ENCODE measurements at regions of chr17 and their contacts with region 1.

Region 1: DNA sequence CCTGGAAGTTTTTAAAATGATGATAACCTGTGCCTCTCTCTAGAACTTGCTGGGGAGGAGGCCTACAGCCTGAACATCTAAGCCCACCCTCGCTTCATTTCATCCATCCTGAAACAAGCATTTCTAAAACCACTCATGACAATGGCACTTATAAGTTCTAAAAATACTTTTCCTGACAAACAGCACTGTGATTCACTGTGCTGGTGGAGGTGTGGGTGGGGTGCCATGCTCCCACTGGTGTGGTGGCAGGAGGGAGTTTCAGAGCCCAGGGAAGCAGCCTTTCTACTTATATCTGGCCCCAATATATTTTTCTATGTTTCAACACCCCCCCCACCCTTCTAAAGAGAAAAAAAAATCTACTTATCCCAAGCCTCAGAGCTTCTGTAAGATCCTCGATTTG is 52.6 kb downstream of the RAB11FIP4 start:
- DNase-seq: no peak
- ATAC-seq: no peak
- H3K4me3 ChIP-seq: no peak overlapping the region
- H3K27ac ChIP-seq: no peak overlapping the region
- H3K4me1 ChIP-seq: no peaks in the 10 kb centered on the region
- H3K27me3 ChIP-seq: no peaks in the 10 kb centered on the region
- CTCF ChIP-seq: no peak

Region 2: DNA sequence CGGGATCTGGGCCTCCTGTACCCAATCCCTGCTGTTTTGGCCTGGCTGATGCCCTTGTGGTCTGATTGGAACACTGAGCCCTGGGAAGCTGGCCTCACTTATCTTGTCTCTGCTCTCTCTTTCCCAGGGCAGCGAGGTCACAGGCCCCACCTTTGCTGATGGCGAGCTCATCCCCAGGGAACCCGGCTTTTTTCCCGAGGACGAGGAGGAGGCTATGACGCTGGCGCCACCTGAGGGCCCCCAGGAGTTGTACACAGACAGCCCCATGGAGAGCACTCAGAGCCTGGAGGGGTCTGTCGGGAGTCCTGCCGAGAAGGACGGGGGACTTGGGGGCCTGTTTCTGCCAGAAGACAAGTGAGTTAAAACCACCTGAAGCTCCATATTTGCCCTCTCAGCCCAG is 73.5 kb after region 1 on chr17:
- intact Hi-C with region 1: loop called in 1 of 10 experiments (anchors 5 kb)
- DNase-seq: no peak
- ATAC-seq: peak in 3 of 8 donors; percentile 19 to 67 (median 53)
- H3K4me3 ChIP-seq: no peak overlapping the region
- H3K27ac ChIP-seq: no peak overlapping the region
- H3K4me1 ChIP-seq: peaks cover 0 to 3% (median 0%) of the 10 kb centered on the region in 9 donors
- H3K27me3 ChIP-seq: no peaks in the 10 kb centered on the region
- CTCF ChIP-seq: peak in 8 of 9 donors; percentile 15 to 53 (median 42)

Measured in heart right ventricle (tissue), 16 donors.